Activated CD4-positive, alpha-beta memory T cell treated with anti-CD3 and anti-CD28 coated beads for 36 hours (primary cell): ENCODE measurements at regions of chr6 and their contacts with region 1.

Region 1: DNA sequence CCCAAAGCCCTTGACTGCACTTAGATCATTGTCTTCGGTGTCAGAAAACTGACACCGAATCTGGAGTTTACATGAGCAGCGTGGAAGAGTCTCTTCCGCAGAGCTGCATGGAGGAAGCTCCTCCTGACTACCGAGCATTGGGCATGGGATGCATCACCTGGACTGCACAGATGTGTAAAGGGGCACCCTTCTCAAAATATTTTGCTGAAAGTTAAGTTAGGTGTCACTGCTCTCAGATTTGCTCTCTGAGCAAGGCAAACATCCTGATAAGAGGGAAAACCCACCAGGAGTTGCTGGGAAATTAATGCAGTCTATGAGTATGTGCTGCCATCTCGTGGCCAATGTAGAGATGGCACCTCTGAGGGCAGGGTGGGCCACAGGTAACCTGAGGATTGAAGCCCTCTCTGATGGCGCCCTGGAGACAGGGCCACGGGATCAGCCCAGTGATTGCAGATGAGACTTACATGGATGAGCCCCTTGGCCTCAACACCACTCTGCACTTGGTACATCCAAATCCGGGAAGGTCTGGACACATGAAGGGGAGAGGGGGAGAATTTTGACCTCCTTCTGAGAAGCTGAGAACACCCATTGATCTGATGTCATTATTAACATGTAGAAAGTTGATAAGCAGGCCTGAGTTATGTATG is 129.9 kb downstream of the LPA start:
- DNase-seq: peak; percentile 69
- H3K4me3 Mint-ChIP-seq: no peak overlapping the region
- H3K27ac Mint-ChIP-seq: no peak overlapping the region
- H3K4me1 Mint-ChIP-seq: no peaks in the 10 kb centered on the region
- H3K27me3 Mint-ChIP-seq: no peaks in the 10 kb centered on the region

Region 2: GRCh38 chr6:160337301-160337700 is 196.9 kb before region 1 on chr6:
- CTCF ChIA-PET with region 1: no interaction called
- POLR2A ChIA-PET with region 1: no interaction called
- intact Hi-C with region 1: no loop called
- DNase-seq: no peak
- H3K4me3 Mint-ChIP-seq: no peak overlapping the region
- H3K27ac Mint-ChIP-seq: no peak overlapping the region
- H3K4me1 Mint-ChIP-seq: no peaks in the 10 kb centered on the region
- H3K27me3 Mint-ChIP-seq: peaks cover 19% of the 10 kb centered on the region

Region 3: DNA sequence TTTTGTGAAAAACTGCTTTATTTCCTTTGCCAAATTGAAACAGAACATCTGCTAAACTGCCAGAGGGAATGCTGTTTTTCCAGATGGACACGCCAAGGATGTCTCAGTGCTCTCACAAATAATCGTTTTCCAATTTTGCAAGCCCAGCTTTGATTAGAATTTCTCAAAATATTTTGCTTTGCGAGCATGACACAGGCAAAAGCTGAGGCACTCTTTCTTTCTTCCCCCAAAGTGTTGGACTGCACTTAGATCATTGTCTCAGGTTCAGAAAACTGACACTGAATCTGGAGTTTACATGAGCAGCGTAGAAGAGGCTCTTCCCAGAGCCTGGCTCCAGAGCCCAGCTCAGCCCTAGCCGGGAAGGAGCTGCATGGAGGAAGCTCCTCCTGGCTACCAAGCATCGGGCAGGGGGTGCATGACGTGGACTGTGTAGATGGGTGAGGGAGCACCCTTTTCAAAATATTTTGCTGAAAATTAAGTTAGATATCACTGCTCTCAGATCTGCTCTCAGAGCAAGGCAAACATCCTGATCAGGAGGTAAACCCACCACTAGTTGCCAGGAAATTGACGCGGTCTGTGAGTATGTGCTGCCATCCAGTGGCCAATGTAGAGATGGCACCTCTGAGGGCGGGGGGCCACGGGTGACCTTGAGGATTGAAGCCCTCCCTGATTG is 78.5 kb before region 1 on chr6:
- CTCF ChIA-PET with region 1: interaction called, 14 read pairs
- POLR2A ChIA-PET with region 1: no interaction called
- intact Hi-C with region 1: no loop called
- DNase-seq: peak; percentile 78
- H3K4me3 Mint-ChIP-seq: no peak overlapping the region
- H3K27ac Mint-ChIP-seq: no peak overlapping the region
- H3K4me1 Mint-ChIP-seq: peaks cover 28% of the 10 kb centered on the region
- H3K27me3 Mint-ChIP-seq: peaks cover 7% of the 10 kb centered on the region

Region 4: DNA sequence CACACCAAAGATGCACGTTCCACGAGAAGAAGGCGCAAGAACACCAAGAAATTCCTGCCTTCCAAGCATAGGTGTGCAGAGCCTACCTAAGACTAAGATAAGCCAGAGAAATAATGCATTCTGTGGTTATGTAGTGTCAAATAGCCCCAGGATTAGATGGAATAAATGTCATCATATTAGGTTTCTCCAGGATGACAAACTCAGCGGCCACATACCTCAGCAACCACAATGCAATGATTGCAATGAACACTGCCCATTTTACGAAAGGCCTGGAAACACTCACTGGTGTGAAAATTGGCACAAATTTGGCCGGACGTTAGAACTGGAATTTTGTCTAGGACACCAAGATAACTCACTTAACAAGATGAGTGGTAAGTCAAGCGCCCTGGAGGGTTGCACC is 56.3 kb before region 1 on chr6:
- CTCF ChIA-PET with region 1: no interaction called
- POLR2A ChIA-PET with region 1: no interaction called
- intact Hi-C with region 1: no loop called
- DNase-seq: no peak
- H3K4me3 Mint-ChIP-seq: no peak overlapping the region
- H3K27ac Mint-ChIP-seq: no peak overlapping the region
- H3K4me1 Mint-ChIP-seq: peaks cover 7% of the 10 kb centered on the region
- H3K27me3 Mint-ChIP-seq: no peaks in the 10 kb centered on the region

Region 5: GRCh38 chr6:160818934-160819333 is 284.8 kb after region 1 on chr6:
- CTCF ChIA-PET with region 1: no interaction called
- POLR2A ChIA-PET with region 1: no interaction called
- intact Hi-C with region 1: no loop called
- DNase-seq: no peak
- H3K4me3 Mint-ChIP-seq: no peak overlapping the region
- H3K27ac Mint-ChIP-seq: no peak overlapping the region
- H3K4me1 Mint-ChIP-seq: no peaks in the 10 kb centered on the region
- H3K27me3 Mint-ChIP-seq: peaks cover 4% of the 10 kb centered on the region

Region 6: GRCh38 chr6:162198925-162199324 is 1664.8 kb after region 1 on chr6:
- CTCF ChIA-PET with region 1: no interaction called
- POLR2A ChIA-PET with region 1: no interaction called
- intact Hi-C with region 1: no loop called
- DNase-seq: no peak
- H3K4me3 Mint-ChIP-seq: no peak overlapping the region
- H3K27ac Mint-ChIP-seq: no peak overlapping the region
- H3K4me1 Mint-ChIP-seq: no peaks in the 10 kb centered on the region
- H3K27me3 Mint-ChIP-seq: no peaks in the 10 kb centered on the region